Posterior vena cava (tissue), 2 donors: ENCODE measurements at regions of chr7 and their contacts with region 1.

Region 1: DNA sequence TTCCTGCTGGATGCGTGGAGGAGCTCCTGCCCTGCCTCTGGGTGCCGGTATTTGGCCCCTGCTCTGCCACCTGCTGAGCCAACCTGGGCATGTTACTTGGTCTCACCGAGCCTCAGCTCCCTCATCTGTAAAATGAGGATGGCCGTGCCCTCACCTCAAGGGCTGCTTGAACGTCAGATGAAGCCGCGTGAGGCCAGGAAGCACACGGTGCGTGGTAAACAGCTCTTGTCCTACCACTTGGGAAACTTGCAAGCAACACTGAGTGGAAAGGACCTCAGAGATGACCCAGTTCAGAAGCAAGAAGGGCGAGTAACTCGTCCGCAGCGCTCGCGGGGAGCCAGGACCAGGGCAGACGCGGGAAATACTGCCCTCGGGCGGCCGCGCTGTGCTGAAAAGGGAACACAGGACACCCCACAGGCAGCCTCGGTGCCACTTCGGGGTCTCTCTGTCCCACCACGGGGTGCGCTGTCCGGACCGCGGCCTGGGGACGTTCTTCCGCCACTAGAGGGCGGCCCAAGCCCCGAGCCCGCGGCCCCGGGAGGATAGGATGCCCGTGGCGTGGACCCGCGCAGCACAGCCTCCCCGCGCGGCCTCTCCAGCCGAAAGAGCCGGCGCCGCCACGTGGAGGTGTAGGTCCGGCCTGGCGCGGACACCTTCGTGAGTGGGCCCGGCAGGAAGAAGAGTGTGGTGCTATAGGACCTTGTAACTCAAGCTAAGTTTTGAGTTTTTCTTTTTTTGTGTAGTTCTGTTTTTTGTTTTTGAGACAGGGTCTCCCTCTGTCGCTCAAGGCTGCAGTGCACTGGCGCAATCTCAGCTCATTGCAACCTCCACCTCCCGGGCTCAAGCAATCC is 94.1 kb downstream of the PRKAG2 start:
- DNase-seq: peak; percentile 94

Region 2: GRCh38 chr7:151876899-151877777 is 94.3 kb after region 1 on chr7 and contains the start of gene PRKAG2:
- intact Hi-C with region 1: loop called in 1 of 2 experiments (anchors 10 kb)
- DNase-seq: peak; percentile 94
- total RNA-seq, gene PRKAG2: 91.8 to 94.2 TPM

Region 3: DNA sequence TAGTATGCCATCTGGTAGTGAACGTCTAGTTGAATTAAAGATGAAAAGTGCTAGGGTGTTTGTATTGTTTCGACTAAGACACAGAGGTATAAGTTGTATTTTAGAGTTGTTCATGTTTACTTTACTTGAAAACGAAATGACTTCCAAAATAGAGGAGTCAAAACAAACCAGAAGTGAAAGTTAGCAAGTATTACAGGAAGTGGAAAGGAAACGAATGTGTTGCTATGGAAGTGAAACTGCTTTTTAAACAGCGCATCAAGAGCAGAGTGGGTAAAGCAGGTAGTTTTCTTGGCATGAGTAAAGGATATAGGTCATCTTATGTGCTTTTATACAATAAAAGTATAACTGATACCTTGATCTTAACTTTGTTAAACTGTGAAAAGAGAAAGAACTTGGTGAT is 153.4 kb after region 1 on chr7:
- intact Hi-C with region 1: loop called (anchors 5 kb)
- DNase-seq: no peak